MCF 10A (cell line): ENCODE measurements at regions of chr18 and their contacts with region 1.

Region 1: GRCh38 chr18:35005963-35006577 is 35.1 kb upstream of the MAPRE2 start:
- DNase-seq: peak; percentile 71
- H3K4me3 Mint-ChIP-seq: no peak overlapping the region
- H3K27ac Mint-ChIP-seq: no peak overlapping the region
- H3K4me1 Mint-ChIP-seq: no peaks in the 10 kb centered on the region
- H3K27me3 Mint-ChIP-seq: peaks cover 20% of the 10 kb centered on the region
- CTCF ChIP-seq: peak; percentile 35

Region 2: GRCh38 chr18:34122724-34123334 is 883.2 kb before region 1 on chr18:
- CTCF ChIA-PET with region 1: no interaction called
- POLR2A ChIA-PET with region 1: no interaction called
- intact Hi-C with region 1: loop called (anchors 5 kb)
- DNase-seq: peak; percentile 63
- H3K4me3 Mint-ChIP-seq: no peak overlapping the region
- H3K27ac Mint-ChIP-seq: no peak overlapping the region
- H3K4me1 Mint-ChIP-seq: peaks cover 5% of the 10 kb centered on the region
- H3K27me3 Mint-ChIP-seq: no peaks in the 10 kb centered on the region
- CTCF ChIP-seq: peak; percentile 76

Region 3: GRCh38 chr18:34624551-34624950 is 381.5 kb before region 1 on chr18:
- CTCF ChIA-PET with region 1: no interaction called
- POLR2A ChIA-PET with region 1: no interaction called
- intact Hi-C with region 1: no loop called
- DNase-seq: no peak
- H3K4me3 Mint-ChIP-seq: no peak overlapping the region
- H3K27ac Mint-ChIP-seq: no peak overlapping the region
- H3K4me1 Mint-ChIP-seq: no peaks in the 10 kb centered on the region
- H3K27me3 Mint-ChIP-seq: peaks cover 2% of the 10 kb centered on the region
- CTCF ChIP-seq: no peak

Region 4: GRCh38 chr18:34867520-34867919 is 138.6 kb before region 1 on chr18:
- CTCF ChIA-PET with region 1: interaction called, 7 read pairs
- POLR2A ChIA-PET with region 1: no interaction called
- intact Hi-C with region 1: loop called (anchors 2 kb)
- DNase-seq: no peak
- H3K4me3 Mint-ChIP-seq: no peak overlapping the region
- H3K27ac Mint-ChIP-seq: no peak overlapping the region
- H3K4me1 Mint-ChIP-seq: no peaks in the 10 kb centered on the region
- H3K27me3 Mint-ChIP-seq: no peaks in the 10 kb centered on the region
- CTCF ChIP-seq: peak; percentile 7

Region 5: GRCh38 chr18:35029770-35030169 is 23.7 kb after region 1 on chr18:
- CTCF ChIA-PET with region 1: interaction called, 17 read pairs
- POLR2A ChIA-PET with region 1: interaction called, 4 read pairs
- intact Hi-C with region 1: no loop called
- DNase-seq: no peak
- H3K4me3 Mint-ChIP-seq: no peak overlapping the region
- H3K27ac Mint-ChIP-seq: peak overlapping the region; percentile 20
- H3K4me1 Mint-ChIP-seq: peaks cover 6% of the 10 kb centered on the region
- H3K27me3 Mint-ChIP-seq: no peaks in the 10 kb centered on the region
- CTCF ChIP-seq: no peak

Region 6: GRCh38 chr18:35231052-35231451 is 225.0 kb after region 1 on chr18:
- CTCF ChIA-PET with region 1: interaction called, 3 read pairs
- POLR2A ChIA-PET with region 1: no interaction called
- intact Hi-C with region 1: loop called (anchors 1 kb)
- DNase-seq: peak; percentile 82
- H3K4me3 Mint-ChIP-seq: peak overlapping the region; percentile 52
- H3K27ac Mint-ChIP-seq: no peak overlapping the region
- H3K4me1 Mint-ChIP-seq: peaks cover 4% of the 10 kb centered on the region
- H3K27me3 Mint-ChIP-seq: no peaks in the 10 kb centered on the region
- CTCF ChIP-seq: peak; percentile 83

Region 7: DNA sequence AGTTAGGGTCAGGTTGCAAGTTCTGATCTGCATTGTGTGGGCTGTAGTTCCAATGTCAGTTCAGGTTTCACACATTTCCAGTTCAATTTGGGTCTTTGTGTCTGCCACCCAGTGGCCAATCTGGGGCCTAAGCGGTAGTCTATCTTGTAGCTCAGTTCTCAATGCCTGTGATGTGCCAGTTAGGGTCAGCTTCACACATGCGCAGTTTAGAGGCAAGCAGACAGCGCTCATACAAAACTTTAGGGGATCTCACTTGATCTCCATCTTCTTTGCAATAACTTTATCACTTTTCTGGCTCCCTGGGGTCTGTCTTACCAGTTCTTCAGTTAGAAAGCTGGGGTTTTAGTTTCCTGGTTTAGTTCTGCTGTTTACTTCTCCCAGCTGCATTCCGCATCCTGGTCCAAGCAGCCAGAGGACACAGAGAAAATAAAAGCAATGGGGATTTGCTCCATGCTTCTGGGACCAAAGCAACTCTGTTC is 349.1 kb after region 1 on chr18:
- CTCF ChIA-PET with region 1: no interaction called
- POLR2A ChIA-PET with region 1: no interaction called
- intact Hi-C with region 1: loop called (anchors 1 kb)
- DNase-seq: peak; percentile 72
- H3K4me3 Mint-ChIP-seq: no peak overlapping the region
- H3K27ac Mint-ChIP-seq: no peak overlapping the region
- H3K4me1 Mint-ChIP-seq: no peaks in the 10 kb centered on the region
- H3K27me3 Mint-ChIP-seq: no peaks in the 10 kb centered on the region
- CTCF ChIP-seq: peak; percentile 50

Region 8: GRCh38 chr18:35422237-35422636 is 416.2 kb after region 1 on chr18:
- CTCF ChIA-PET with region 1: no interaction called
- POLR2A ChIA-PET with region 1: no interaction called
- intact Hi-C with region 1: no loop called
- DNase-seq: no peak
- H3K4me3 Mint-ChIP-seq: no peak overlapping the region
- H3K27ac Mint-ChIP-seq: no peak overlapping the region
- H3K4me1 Mint-ChIP-seq: no peaks in the 10 kb centered on the region
- H3K27me3 Mint-ChIP-seq: no peaks in the 10 kb centered on the region
- CTCF ChIP-seq: no peak